ENCODE measurements at regions of chr16 and their contacts with region 1.

Region 1: DNA sequence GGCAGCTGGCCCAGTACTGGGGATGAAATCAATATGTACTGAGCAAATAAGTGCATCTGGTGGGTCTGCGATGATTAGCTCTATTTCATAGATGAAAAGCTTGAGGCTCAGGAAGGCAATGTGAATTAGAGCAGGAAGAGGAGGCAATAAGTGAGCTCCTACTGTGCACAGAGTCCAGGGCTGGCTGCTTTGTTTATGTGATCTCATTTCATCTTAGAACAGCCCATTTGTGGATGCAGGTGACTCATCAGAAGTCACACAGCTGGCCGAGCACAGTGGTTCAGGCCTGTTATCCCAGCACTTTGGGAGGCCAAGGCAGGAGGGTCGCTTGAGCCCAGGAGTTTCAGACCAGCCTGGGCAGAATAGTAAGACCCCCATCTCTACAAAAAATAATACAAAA is 7.1 kb downstream of the TMEM114 start:
- DNase-seq: peak; percentile 27
- H3K4me3 ChIP-seq: no peak overlapping the region
- H3K27ac ChIP-seq: no peak overlapping the region
- H3K4me1 ChIP-seq: no peaks in the 10 kb centered on the region
- H3K27me3 ChIP-seq: peaks cover 1% of the 10 kb centered on the region
- CTCF ChIP-seq: no peak

Region 2: GRCh38 chr16:8380311-8380710 is 202.9 kb before region 1 on chr16:
- CTCF ChIA-PET with region 1: no interaction called
- dilution Hi-C with region 1: no loop called
- in situ Hi-C with region 1: no loop called
- intact Hi-C with region 1: no loop called
- DNase-seq: no peak
- H3K4me3 ChIP-seq: no peak overlapping the region
- H3K27ac ChIP-seq: no peak overlapping the region
- H3K4me1 ChIP-seq: no peaks in the 10 kb centered on the region
- H3K27me3 ChIP-seq: no peaks in the 10 kb centered on the region
- CTCF ChIP-seq: no peak

Region 3: DNA sequence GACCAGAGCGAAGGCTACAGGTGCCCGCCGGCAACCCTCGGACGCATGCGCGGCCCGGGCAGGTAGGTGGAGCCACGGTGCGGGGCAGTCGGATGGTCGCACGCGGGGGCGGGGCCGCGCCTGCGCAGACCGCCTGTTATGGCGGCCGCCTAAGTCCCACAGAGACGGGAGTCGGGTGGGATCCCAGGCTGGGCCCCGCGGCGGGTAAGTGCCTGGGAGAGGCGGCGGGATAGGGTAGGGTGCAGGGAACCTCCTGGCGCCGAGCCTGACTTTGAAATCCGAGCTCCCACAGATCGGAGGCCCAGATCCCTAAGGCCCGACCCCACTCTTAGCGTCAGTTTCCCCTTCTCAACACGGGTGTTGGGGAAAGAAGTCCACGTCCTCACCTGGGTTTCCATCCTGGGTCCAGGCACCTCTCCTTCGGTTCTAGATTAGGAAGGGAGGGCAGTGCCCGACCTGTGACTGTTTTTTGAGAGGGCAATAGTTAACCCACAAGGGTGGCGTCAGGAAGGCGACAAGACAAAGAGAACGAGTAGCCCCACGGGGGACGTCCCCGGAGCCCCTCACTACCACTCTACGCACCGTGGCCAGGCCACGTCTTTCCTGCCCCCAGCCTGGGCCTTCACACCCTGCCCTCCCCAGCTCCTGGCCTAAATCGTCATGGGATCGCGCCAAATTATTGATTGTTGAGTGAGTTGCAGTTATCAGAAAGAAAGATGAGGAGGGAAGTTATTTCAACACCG is 38.5 kb after region 1 on chr16 and contains the start of gene METTL22:
- CTCF ChIA-PET with region 1: no interaction called
- dilution Hi-C with region 1: no loop called
- in situ Hi-C with region 1: no loop called
- intact Hi-C with region 1: loop called (anchors 1 kb)
- DNase-seq: peak; percentile 74
- H3K4me3 ChIP-seq: peak within 1 kb of the TSS; percentile 63 to 85 (median 79)
- H3K27ac ChIP-seq: peak within 1 kb of the TSS; percentile 83
- H3K4me1 ChIP-seq: peaks cover 10% of the 10 kb centered on the region
- H3K27me3 ChIP-seq: no peaks in the 10 kb centered on the region
- CTCF ChIP-seq: no peak
- total RNA-seq, gene METTL22: 35.2 to 40.9 TPM

Measured in mammary epithelial cell (primary cell).